Heart right ventricle (tissue), 16 donors: ENCODE measurements at regions of chr21 and their contacts with region 1.

Region 1: DNA sequence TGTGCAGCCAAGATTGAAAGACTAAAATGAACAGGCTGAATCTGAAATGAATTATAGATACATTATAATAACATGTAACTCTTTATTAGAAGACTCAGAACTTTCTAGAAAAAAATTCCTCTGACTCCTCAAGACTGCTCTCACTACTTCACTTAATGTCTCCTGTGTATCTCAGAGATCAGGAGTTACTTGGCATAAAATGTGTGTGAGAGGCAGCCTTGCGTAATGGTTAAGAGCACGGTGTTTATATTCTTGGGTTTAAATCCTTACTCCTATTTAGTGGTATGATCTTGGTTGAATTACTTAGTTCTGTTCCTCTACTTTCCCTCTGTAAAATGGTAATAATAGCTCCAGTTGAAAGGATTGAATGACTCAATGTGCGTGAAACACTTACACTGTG is 634.9 kb downstream of the LTN1 start:
- DNase-seq: no peak
- ATAC-seq: no peak
- H3K4me3 ChIP-seq: no peak overlapping the region
- H3K27ac ChIP-seq: no peak overlapping the region
- H3K4me1 ChIP-seq: no peaks in the 10 kb centered on the region
- H3K27me3 ChIP-seq: no peaks in the 10 kb centered on the region
- CTCF ChIP-seq: no peak

Region 2: DNA sequence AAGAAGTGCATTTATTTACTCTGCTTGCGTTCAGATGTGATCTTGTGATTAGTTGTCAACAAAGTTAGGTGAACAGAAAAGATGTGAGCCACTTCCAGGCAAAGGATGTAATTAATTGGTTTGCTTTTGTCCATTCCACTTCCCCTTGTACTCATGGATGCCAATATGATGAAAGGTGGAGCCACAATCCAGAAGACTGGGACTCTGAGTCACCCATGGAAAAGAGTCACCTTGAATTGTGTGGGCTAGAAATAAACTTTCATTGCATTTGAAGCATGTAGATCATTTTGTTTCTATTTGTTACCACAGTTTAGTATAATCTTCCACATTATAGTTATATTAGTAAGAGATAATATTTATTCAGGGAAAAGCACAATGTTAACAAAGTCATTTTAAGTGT is 49.2 kb before region 1 on chr21:
- intact Hi-C with region 1: no loop called
- DNase-seq: no peak
- ATAC-seq: no peak
- H3K4me3 ChIP-seq: no peak overlapping the region
- H3K27ac ChIP-seq: no peak overlapping the region
- H3K4me1 ChIP-seq: no peaks in the 10 kb centered on the region
- H3K27me3 ChIP-seq: no peaks in the 10 kb centered on the region
- CTCF ChIP-seq: no peak

Region 3: GRCh38 chr21:28387220-28387619 is 29.5 kb after region 1 on chr21:
- intact Hi-C with region 1: no loop called
- DNase-seq: no peak
- ATAC-seq: peak in 1 of 8 donors; percentile 60
- H3K4me3 ChIP-seq: no peak overlapping the region
- H3K27ac ChIP-seq: peak overlapping the region in 2 of 10 donors; percentile 1 to 3
- H3K4me1 ChIP-seq: no peaks in the 10 kb centered on the region
- H3K27me3 ChIP-seq: no peaks in the 10 kb centered on the region
- CTCF ChIP-seq: no peak

Region 4: GRCh38 chr21:28509031-28509430 is 151.3 kb after region 1 on chr21:
- intact Hi-C with region 1: loop called in 1 of 10 experiments (anchors 10 kb)
- DNase-seq: no peak
- ATAC-seq: peak in 4 of 8 donors; percentile 11 to 71 (median 52)
- H3K4me3 ChIP-seq: no peak overlapping the region
- H3K27ac ChIP-seq: peak overlapping the region in 3 of 10 donors; percentile 2 to 56 (median 5)
- H3K4me1 ChIP-seq: peaks cover 0 to 32% (median 0%) of the 10 kb centered on the region in 9 donors
- H3K27me3 ChIP-seq: no peaks in the 10 kb centered on the region
- CTCF ChIP-seq: no peak